SK-N-SH (cell line): ENCODE measurements at regions of chr14 and their contacts with region 1.

Region 1: DNA sequence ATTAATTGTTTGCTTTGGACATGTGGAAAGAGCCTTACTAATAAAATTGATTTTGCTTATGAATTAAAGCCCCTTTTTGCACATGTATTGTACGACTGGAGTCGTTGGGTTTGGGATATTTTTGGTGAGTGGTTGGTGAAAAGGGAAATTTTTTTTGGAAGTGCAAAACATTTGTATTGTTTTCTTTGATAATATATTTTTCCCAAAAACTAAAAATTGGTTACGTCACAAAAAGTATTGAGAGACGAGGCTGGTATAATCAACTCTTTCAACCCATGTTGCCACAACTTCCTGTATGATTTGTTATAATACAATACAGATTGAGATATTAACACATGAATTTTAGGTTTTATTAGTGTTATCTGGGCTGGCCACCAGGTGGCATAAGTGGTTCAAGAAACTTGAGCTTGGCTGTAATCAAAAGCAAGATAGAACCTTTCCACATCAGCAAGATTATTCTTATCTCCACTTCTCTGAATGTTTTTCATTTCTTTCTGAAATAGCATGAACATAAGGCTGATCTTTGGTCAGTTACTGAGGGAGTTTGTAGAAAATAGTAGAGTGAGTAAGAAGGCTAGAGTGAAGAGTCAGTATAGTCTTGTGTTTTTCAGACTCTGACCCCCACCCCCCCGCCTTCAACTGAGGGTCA is 8.7 kb downstream of the NGDN start:
- DNase-seq: peak; percentile 39
- H3K4me3 ChIP-seq: no peak overlapping the region
- H3K27ac ChIP-seq: no peak overlapping the region
- H3K4me1 ChIP-seq: no peaks in the 10 kb centered on the region
- H3K27me3 ChIP-seq: no peaks in the 10 kb centered on the region
- CTCF ChIP-seq: peak; percentile 85
- EP300 ChIP-seq: no peak
- RAD21 ChIP-seq: peak; percentile 87

Region 2: GRCh38 chr14:23494223-23494622 is 16.0 kb after region 1 on chr14:
- CTCF ChIA-PET with region 1: interaction called, 54 read pairs
- POLR2A ChIA-PET with region 1: no interaction called
- DNase-seq: peak; percentile 34
- H3K4me3 ChIP-seq: no peak overlapping the region
- H3K27ac ChIP-seq: no peak overlapping the region
- H3K4me1 ChIP-seq: no peaks in the 10 kb centered on the region
- H3K27me3 ChIP-seq: no peaks in the 10 kb centered on the region
- CTCF ChIP-seq: no peak
- EP300 ChIP-seq: no peak
- RAD21 ChIP-seq: no peak

Region 3: GRCh38 chr14:23521785-23522640 is 43.8 kb after region 1 on chr14:
- CTCF ChIA-PET with region 1: interaction called, 142 read pairs
- POLR2A ChIA-PET with region 1: no interaction called
- DNase-seq: no peak
- H3K4me3 ChIP-seq: no peak overlapping the region
- H3K27ac ChIP-seq: no peak overlapping the region
- H3K4me1 ChIP-seq: no peaks in the 10 kb centered on the region
- H3K27me3 ChIP-seq: no peaks in the 10 kb centered on the region
- CTCF ChIP-seq: no peak
- EP300 ChIP-seq: no peak
- RAD21 ChIP-seq: no peak

Region 4: GRCh38 chr14:23539248-23540140 is 61.3 kb after region 1 on chr14:
- CTCF ChIA-PET with region 1: interaction called, 276 read pairs
- POLR2A ChIA-PET with region 1: interaction called, 3 read pairs
- DNase-seq: peak; percentile 92
- H3K4me3 ChIP-seq: no peak overlapping the region
- H3K27ac ChIP-seq: peak overlapping the region in 1 of 2 experiments; percentile 30; a peak in 1 of 4 replicates
- H3K4me1 ChIP-seq: peaks cover 4 to 8% of the 10 kb centered on the region in 2 experiments; a peak in 1 of 4 replicates
- H3K27me3 ChIP-seq: no peaks in the 10 kb centered on the region
- CTCF ChIP-seq: peak; percentile 75
- EP300 ChIP-seq: no peak
- RAD21 ChIP-seq: peak; percentile 79

Region 5: GRCh38 chr14:23555882-23556699 is 77.9 kb after region 1 on chr14 and contains the start of gene THTPA:
- CTCF ChIA-PET with region 1: interaction called, 785 read pairs
- POLR2A ChIA-PET with region 1: interaction called, 10 read pairs
- DNase-seq: peak; percentile 92
- H3K4me3 ChIP-seq: peak within 1 kb of the TSS; percentile 76 to 93
- H3K27ac ChIP-seq: peak within 1 kb of the TSS; percentile 74 to 91
- H3K4me1 ChIP-seq: peaks cover 5 to 15% of the 10 kb centered on the region in 2 experiments; a peak in 1 of 4 replicates
- H3K27me3 ChIP-seq: no peaks in the 10 kb centered on the region
- CTCF ChIP-seq: no peak
- EP300 ChIP-seq: no peak
- RAD21 ChIP-seq: no peak
- polyA plus RNA-seq, gene THTPA: 15.5 and 16.3 TPM in 2 replicates